Posterior cingulate gyrus (tissue), 11 donors: ENCODE measurements at regions of chr7 and their contacts with region 1.

Region 1: DNA sequence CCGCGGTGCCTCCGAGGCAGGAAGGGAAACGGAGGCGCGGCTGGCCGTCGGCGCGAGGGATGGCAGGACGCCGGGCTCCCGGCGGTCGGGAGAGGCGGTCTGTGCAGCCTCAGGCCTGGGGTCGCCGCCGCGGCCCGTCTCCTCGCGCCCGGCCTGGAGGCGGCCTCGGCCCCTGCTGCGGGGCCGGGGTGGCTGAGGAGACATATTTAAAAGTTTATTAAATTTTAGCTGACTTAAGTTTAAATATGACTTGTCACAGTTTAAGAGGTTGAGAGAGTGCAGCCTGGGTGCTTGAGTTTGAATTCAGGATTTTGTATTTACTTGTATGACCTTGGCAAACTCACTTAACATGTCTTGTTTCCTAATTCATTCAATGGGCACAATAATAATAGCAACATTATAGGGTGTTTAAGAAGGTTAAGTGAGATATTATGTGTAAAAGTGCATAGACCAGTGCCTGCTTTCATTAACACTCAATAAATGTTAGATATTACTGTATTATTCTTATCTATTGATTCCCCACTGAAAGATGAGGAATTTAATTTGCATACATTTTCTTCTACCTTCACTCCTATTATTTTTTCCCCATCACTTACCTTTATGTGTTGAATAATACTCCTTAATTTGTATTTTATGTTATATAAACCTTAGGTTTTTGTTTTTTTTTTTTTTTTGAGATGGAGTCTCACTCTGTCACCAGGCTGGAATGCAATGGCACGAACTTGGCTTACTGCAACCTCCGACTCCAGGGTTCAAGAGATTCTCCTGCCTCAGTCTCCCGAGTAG is 718 bp downstream of the DYNC2I1 start:
- DNase-seq: no peak

Region 2: DNA sequence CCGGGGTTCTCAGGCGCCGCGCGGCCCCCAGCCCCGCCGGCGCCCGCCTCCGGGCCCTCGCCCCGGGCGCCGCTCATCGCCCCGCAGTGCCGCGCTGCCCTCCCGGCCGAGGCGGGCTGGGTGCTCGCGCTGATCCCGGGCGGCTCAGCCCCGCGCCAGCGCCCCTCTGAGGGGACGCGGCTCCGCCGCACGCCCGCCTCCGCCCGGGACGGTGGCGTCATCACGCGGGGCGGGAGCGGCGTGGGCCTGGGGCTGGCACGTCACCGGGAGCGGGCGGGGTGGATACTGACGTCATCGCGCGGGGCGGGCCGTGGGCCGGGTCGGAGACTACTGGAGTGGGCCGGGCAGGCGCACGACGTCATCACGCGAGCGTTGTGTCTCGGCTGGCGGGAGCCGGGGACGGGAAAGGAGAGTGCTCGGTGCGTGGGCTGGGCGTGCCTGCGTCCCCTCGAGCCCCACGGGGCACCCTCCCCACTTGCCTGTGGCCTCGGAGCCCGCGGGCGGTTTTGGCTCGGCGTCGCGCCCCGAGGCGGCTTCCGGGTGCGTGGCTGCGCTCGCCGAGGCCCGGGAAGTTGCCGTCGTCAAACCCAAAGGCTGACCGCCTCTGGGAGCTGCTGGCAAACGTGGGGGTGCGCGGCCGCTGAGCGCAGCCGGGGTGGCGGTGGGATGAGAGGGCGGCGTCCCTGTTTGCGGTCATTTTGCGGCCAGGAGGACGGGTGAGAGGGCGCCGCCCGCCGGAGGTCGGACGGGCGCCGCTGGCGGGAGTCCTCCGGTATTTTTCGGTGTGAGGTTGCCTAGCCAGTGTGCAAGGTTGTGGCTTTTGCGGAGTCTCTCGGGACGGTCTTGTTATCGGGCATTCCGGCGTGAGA is 27.5 kb before region 1 on chr7 and contains the start of gene ESYT2:
- intact Hi-C with region 1: loop called (anchors 1 kb)
- DNase-seq: peak; percentile 98 to 100 (median 100)